MCF 10A (cell line): ENCODE measurements at regions of chr5 and their contacts with region 1.

Region 1: DNA sequence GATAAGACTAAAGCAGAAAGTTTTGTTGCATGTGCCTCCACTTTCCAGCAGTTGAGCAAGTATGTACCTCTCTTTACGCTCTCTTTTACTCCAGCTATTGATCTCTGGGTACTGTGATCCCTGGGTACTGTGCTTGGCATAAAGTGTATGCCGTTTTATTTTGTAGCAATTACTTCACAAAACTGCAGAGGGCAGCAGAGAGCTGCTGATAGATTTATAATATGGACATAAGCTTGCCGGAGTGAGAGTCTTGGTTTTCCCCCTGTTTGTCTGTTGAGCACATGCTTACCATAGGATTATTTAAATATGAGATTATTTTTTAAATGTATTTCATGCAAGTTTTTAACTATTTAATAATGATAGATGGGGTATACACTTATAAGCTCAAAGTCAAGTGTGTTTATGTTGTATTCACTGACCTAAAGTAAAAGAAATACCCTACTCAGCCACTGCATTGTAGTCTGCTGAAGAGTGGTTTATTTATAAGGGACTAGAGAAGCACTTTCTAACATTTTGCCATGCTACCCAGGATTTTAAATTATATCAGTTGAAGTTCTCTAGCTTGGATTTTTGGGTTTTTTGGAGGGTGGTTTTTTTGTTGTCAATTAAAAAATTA is 13.0 kb downstream of the TTC1 start:
- DNase-seq: peak; percentile 81
- H3K4me3 Mint-ChIP-seq: no peak overlapping the region
- H3K27ac Mint-ChIP-seq: no peak overlapping the region
- H3K4me1 Mint-ChIP-seq: peaks cover 13% of the 10 kb centered on the region
- H3K27me3 Mint-ChIP-seq: no peaks in the 10 kb centered on the region
- CTCF ChIP-seq: peak; percentile 82

Region 2: GRCh38 chr5:159971038-159971437 is 50.9 kb before region 1 on chr5:
- CTCF ChIA-PET with region 1: no interaction called
- POLR2A ChIA-PET with region 1: no interaction called
- intact Hi-C with region 1: no loop called
- DNase-seq: no peak
- H3K4me3 Mint-ChIP-seq: no peak overlapping the region
- H3K27ac Mint-ChIP-seq: no peak overlapping the region
- H3K4me1 Mint-ChIP-seq: peaks cover 9% of the 10 kb centered on the region
- H3K27me3 Mint-ChIP-seq: no peaks in the 10 kb centered on the region
- CTCF ChIP-seq: no peak

Region 3: GRCh38 chr5:160001457-160001856 is 20.5 kb before region 1 on chr5:
- CTCF ChIA-PET with region 1: interaction called, 12 read pairs
- POLR2A ChIA-PET with region 1: no interaction called
- intact Hi-C with region 1: no loop called
- DNase-seq: no peak
- H3K4me3 Mint-ChIP-seq: no peak overlapping the region
- H3K27ac Mint-ChIP-seq: no peak overlapping the region
- H3K4me1 Mint-ChIP-seq: no peaks in the 10 kb centered on the region
- H3K27me3 Mint-ChIP-seq: no peaks in the 10 kb centered on the region
- CTCF ChIP-seq: no peak

Region 4: GRCh38 chr5:160039810-160040470 is 18.0 kb after region 1 on chr5:
- CTCF ChIA-PET with region 1: interaction called, 27 read pairs
- POLR2A ChIA-PET with region 1: interaction called, 4 read pairs
- intact Hi-C with region 1: no loop called
- DNase-seq: peak; percentile 31
- H3K4me3 Mint-ChIP-seq: no peak overlapping the region
- H3K27ac Mint-ChIP-seq: peak overlapping the region; percentile 49
- H3K4me1 Mint-ChIP-seq: no peaks in the 10 kb centered on the region
- H3K27me3 Mint-ChIP-seq: no peaks in the 10 kb centered on the region
- CTCF ChIP-seq: no peak

Region 5: DNA sequence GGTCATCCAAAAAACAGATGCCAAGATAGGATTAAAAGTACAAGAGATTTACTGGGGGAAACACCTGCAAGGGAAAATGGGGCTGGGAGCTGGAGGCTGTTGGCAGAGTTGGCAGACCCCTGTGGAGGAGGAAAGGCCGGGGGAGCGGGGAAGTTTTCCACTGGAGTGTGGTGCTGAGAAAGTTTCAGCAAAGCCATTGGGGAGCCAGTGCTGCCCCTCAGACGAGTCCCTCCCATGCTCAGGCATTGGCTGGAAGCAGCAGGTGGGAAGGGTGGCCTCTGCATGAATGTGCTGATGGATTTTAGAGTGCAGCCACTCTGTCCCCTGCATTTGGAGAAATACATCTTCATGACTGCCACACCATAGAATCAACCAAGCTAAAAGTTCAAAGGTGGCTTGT is 39.8 kb after region 1 on chr5:
- CTCF ChIA-PET with region 1: interaction called, 16 read pairs
- POLR2A ChIA-PET with region 1: no interaction called
- intact Hi-C with region 1: no loop called
- DNase-seq: no peak
- H3K4me3 Mint-ChIP-seq: no peak overlapping the region
- H3K27ac Mint-ChIP-seq: no peak overlapping the region
- H3K4me1 Mint-ChIP-seq: no peaks in the 10 kb centered on the region
- H3K27me3 Mint-ChIP-seq: no peaks in the 10 kb centered on the region
- CTCF ChIP-seq: no peak

Region 6: GRCh38 chr5:160199410-160199911 is 177.5 kb after region 1 on chr5:
- CTCF ChIA-PET with region 1: interaction called, 10 read pairs
- POLR2A ChIA-PET with region 1: no interaction called
- intact Hi-C with region 1: loop called (anchors 1 kb)
- DNase-seq: peak; percentile 66
- H3K4me3 Mint-ChIP-seq: peak overlapping the region; percentile 6
- H3K27ac Mint-ChIP-seq: no peak overlapping the region
- H3K4me1 Mint-ChIP-seq: peaks cover 5% of the 10 kb centered on the region
- H3K27me3 Mint-ChIP-seq: peaks cover 10% of the 10 kb centered on the region
- CTCF ChIP-seq: peak; percentile 100

Region 7: DNA sequence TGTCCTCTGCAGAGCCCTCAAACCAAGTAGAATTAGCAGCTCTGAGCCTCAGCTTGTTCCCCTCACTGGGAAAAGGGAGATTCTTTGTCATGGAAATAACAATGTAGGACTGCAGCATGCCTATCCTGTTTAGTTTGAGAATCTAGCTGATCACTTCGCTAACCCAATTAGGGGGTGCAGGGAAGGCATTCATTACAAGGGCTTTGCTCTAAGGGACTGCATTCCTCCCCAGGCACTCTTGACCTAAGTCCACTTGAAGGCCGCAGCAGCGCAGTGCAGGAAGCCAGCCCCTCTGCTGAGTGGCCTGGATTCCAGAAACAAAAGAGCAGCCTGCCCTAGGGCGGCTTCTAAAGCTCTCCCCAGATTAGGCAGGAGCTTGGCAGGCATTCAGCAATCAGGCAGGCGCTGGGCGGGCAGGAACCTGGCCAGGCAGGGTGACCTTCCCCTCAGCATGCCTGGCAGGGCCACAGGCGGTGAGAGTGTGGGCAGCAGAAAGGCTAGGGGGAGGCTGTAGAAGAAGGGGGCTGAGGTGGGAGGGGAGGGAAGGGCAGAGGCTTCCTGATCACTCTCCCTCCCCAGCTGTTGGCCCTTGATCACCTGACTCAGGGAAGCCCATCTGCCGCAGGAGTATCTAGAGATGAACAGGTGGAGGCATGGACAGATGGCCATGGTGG is 265.6 kb after region 1 on chr5:
- CTCF ChIA-PET with region 1: interaction called, 10 read pairs
- POLR2A ChIA-PET with region 1: no interaction called
- intact Hi-C with region 1: no loop called
- DNase-seq: peak; percentile 87
- H3K4me3 Mint-ChIP-seq: no peak overlapping the region
- H3K27ac Mint-ChIP-seq: no peak overlapping the region
- H3K4me1 Mint-ChIP-seq: peaks cover 18% of the 10 kb centered on the region
- H3K27me3 Mint-ChIP-seq: no peaks in the 10 kb centered on the region
- CTCF ChIP-seq: no peak

Region 8: DNA sequence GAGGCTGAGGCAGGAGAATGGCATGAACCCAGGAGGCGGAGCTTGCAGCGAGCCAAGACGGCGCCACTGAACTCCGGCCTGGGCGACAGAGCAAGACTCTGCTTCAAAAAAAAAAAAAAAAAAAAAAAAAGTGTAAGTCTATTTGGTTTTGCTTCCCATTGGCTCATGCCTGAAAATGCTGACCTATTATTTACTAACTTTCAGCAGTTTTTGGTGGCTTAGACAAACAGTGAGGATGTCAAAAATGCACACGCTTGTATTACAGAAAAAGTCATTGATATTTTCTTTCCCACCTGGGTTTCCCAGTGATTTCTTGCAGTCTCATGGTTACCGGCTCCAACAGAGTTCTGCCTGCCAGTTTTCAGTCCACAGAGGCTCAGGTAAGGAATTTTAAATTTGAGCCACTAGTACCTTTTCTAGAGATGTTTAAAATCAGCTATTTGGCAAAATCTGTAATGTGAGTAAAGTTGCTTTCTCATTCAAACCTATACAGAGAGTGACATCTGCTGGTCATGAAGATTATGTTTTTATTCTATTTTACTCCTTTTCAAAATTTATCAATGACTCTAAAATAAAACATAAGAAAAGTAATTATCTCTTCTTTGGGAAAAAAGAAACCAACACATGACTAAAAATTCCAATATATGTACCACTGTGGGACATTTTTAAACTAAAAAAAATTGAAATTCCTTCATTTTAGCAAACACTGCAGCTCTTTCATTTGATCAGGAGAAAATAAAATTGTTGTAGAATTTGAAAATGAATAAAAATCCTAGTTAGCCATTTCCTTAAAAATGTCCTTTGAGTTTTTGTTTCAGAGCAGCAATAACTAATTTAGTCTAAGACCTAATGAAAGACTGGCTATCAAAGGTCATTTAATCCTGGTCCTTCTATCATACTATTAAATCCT is 369.1 kb after region 1 on chr5:
- CTCF ChIA-PET with region 1: interaction called, 162 read pairs
- POLR2A ChIA-PET with region 1: interaction called, 5 read pairs
- intact Hi-C with region 1: loop called (anchors 1 kb)
- DNase-seq: peak; percentile 47
- H3K4me3 Mint-ChIP-seq: no peak overlapping the region
- H3K27ac Mint-ChIP-seq: no peak overlapping the region
- H3K4me1 Mint-ChIP-seq: no peaks in the 10 kb centered on the region
- H3K27me3 Mint-ChIP-seq: no peaks in the 10 kb centered on the region
- CTCF ChIP-seq: peak; percentile 64